ENCODE measurements at regions of chrX and their contacts with region 1.

Region 1: GRCh38 chrX:48648336-48648751 is 35.3 kb upstream of the WAS start:
- DNase-seq: no peak
- ATAC-seq: peak; percentile 63

Region 2: GRCh38 chrX:48703642-48704481 is 55.5 kb after region 1 on chrX:
- intact Hi-C with region 1: no loop called
- DNase-seq: no peak
- ATAC-seq: peak; percentile 68

Region 3: GRCh38 chrX:48945516-48946348 is 297.4 kb after region 1 on chrX:
- intact Hi-C with region 1: loop called (anchors 10 kb)
- DNase-seq: no peak
- ATAC-seq: no peak

Measured in Right ventricle myocardium inferior (tissue), 1 donor.